ENCODE measurements at regions of chr2 and their contacts with region 1.

Region 1: DNA sequence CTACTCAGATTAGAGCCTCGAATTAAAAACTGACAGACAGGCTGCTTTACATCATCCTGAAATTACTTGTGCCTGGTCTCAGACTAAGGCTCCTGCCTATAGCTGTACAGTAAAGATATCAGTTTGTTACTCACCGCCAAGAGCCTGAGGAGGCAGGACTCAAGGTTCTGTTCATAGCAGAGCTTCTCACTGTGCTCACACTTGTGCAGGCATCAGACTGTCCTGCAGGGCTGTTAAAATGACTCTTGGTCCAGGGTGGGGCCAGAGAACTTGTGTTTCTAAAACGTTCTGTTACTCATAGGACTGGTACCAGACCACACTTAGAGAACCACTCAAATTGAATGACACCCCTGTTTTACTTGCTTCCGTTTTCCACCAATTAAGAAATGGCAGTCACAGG is 310.0 kb downstream of the DPP10 start:
- DNase-seq: no peak
- ATAC-seq: no peak
- H3K4me3 ChIP-seq: no peak overlapping the region
- H3K27ac ChIP-seq: no peak overlapping the region
- H3K4me1 ChIP-seq: no peaks in the 10 kb centered on the region
- H3K27me3 ChIP-seq: no peaks in the 10 kb centered on the region
- CTCF ChIP-seq: no peak

Region 2: DNA sequence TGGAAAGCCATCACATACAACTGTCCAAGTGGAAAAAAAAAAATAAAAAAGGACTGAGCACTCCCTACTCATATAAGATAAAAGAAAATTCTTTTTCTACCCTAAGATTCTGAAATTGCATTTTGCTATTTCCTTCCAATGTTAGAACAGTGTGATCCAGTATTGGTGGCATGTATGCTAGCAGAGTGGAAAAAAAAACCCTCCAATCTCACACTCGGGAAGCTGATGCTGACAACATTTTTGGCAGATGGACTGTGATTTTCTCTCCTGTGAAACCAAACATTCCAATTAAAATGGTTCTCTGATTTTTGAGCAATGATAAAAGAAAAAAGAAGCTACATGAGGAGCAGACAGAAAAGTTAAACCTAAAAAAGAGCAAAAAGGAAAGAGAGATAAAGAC is 109.8 kb after region 1 on chr2:
- CTCF ChIA-PET with region 1: no interaction called
- POLR2A ChIA-PET with region 1: no interaction called
- in situ Hi-C with region 1: no loop called
- intact Hi-C with region 1: no loop called
- DNase-seq: no peak
- ATAC-seq: no peak
- H3K4me3 ChIP-seq: no peak overlapping the region
- H3K27ac ChIP-seq: no peak overlapping the region
- H3K4me1 ChIP-seq: no peaks in the 10 kb centered on the region
- H3K27me3 ChIP-seq: no peaks in the 10 kb centered on the region
- CTCF ChIP-seq: no peak

Region 3: GRCh38 chr2:115124817-115125216 is 372.4 kb after region 1 on chr2:
- CTCF ChIA-PET with region 1: interaction called, 10 read pairs
- POLR2A ChIA-PET with region 1: no interaction called
- in situ Hi-C with region 1: no loop called
- intact Hi-C with region 1: no loop called
- DNase-seq: no peak
- ATAC-seq: no peak
- H3K4me3 ChIP-seq: no peak overlapping the region
- H3K27ac ChIP-seq: no peak overlapping the region
- H3K4me1 ChIP-seq: no peaks in the 10 kb centered on the region
- H3K27me3 ChIP-seq: no peaks in the 10 kb centered on the region
- CTCF ChIP-seq: no peak

Measured in Panc1 (cell line).